ENCODE measurements at regions of chr3 and their contacts with region 1.

Region 1: DNA sequence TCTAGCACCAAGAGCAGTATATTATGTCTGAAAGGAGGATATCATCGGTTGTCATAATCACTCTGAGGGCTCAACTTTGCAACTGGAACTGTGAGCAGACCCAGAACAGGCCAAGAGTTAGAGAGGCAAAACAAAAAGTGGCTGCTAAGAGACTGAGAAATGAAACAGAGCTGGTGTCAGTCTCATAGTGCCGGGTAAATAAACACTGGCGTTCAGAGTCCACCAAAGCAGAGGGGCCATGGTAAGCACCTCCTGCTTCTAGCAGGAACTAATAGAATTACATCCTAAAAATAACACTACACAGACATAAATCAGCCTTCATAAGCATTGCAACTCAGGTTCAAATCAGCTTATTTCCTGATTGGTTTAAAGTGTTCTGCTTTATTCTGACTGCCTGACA is 10.3 kb upstream of the IL12A start:
- DNase-seq: no peak
- ATAC-seq: no peak
- H3K4me3 Mint-ChIP-seq: no peak overlapping the region
- H3K27ac Mint-ChIP-seq: no peak overlapping the region
- H3K4me1 Mint-ChIP-seq: no peaks in the 10 kb centered on the region
- H3K27me3 Mint-ChIP-seq: peaks cover 24% of the 10 kb centered on the region
- CTCF ChIP-seq: no peak

Region 2: GRCh38 chr3:159988617-159989271 is 10.4 kb after region 1 on chr3 and contains the start of gene IL12A:
- CTCF ChIA-PET with region 1: interaction called, 29 read pairs
- POLR2A ChIA-PET with region 1: no interaction called
- intact Hi-C with region 1: no loop called
- DNase-seq: peak; percentile 88
- ATAC-seq: peak; percentile 95
- H3K4me3 Mint-ChIP-seq: peak within 1 kb of the TSS; percentile 44
- H3K27ac Mint-ChIP-seq: peak within 1 kb of the TSS; percentile 41
- H3K4me1 Mint-ChIP-seq: peaks cover 22% of the 10 kb centered on the region
- H3K27me3 Mint-ChIP-seq: no peaks in the 10 kb centered on the region
- CTCF ChIP-seq: peak; percentile 96
- total RNA-seq, gene IL12A: not detected

Region 3: DNA sequence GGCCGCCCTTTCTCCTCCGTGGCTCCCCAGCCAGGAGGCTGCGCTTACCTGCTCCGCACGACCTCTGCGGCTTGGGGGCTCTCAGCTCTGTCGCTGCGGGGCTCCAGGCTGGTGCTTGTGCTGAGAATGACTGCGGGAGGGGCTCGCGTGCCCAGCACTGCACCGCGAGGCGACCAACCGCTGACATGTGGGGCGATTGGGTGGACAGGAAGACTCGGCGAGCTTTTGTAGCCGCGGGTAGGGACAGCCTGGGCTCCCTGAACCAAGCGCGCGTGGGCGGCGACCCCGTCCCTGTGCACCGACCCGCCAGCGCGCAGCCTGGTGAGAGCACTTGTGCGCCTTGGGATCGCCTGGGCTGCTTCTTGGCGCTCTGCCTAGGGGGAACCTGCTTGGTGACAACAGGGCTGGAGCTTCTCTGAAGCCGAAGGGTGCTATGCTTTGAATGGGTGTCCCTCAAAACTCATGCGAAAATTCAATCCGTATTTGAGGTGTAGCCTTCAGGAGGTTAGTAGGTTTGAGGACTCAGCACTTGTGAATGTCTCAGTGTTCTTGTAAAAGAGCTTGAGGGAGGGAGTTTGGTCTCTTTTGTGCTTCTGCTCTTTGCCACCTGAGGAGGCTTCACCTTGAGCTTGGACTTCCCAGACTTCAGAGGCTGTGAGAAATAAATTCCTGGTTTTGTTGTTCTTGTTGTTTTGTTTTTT is 60.7 kb after region 1 on chr3:
- CTCF ChIA-PET with region 1: no interaction called
- POLR2A ChIA-PET with region 1: no interaction called
- intact Hi-C with region 1: no loop called
- DNase-seq: peak; percentile 38
- ATAC-seq: peak; percentile 42
- H3K4me3 Mint-ChIP-seq: no peak overlapping the region
- H3K27ac Mint-ChIP-seq: no peak overlapping the region
- H3K4me1 Mint-ChIP-seq: no peaks in the 10 kb centered on the region
- H3K27me3 Mint-ChIP-seq: peaks cover 31% of the 10 kb centered on the region
- CTCF ChIP-seq: no peak